A549 (cell line): ENCODE measurements at regions of chr7 and their contacts with region 1.

Region 1: GRCh38 chr7:55158541-55159382 is 139.9 kb downstream of the EGFR start:
- DNase-seq: no peak
- ATAC-seq: no peak
- H3K4me3 ChIP-seq: no peak overlapping the region
- H3K27ac ChIP-seq: no peak overlapping the region
- H3K4me1 ChIP-seq: no peaks in the 10 kb centered on the region
- CTCF ChIP-seq: no peak
- EP300 ChIP-seq: no peak
- POLR2A ChIP-seq: no peak
- RAD21 ChIP-seq: no peak

Region 2: GRCh38 chr7:55144333-55145317 is 14.1 kb before region 1 on chr7:
- CTCF ChIA-PET with region 1: interaction called, 18 read pairs
- POLR2A ChIA-PET with region 1: no interaction called
- DNase-seq: peak in 1 of 2 experiments; percentile 31
- ATAC-seq: peak; percentile 70 to 86
- H3K4me3 ChIP-seq: no peak overlapping the region
- H3K27ac ChIP-seq: peak overlapping the region in 1 of 2 experiments; percentile 66; a peak in 3 of 6 replicates
- H3K4me1 ChIP-seq: peaks cover 21% of the 10 kb centered on the region; the same call in 2 of the 3 replicates
- CTCF ChIP-seq: peak; percentile 41; the same call in 2 of the 3 replicates
- EP300 ChIP-seq: no peak
- POLR2A ChIP-seq: no peak
- RAD21 ChIP-seq: peak in 1 of 2 experiments; percentile 16; a peak in 2 of 5 replicates